Heart left ventricle (tissue), 16 donors: ENCODE measurements at regions of chr4 and their contacts with region 1.

Region 1: GRCh38 chr4:108570993-108571569 is 49.3 kb upstream of the RPL34 start:
- DNase-seq: no peak
- ATAC-seq: no peak
- H3K4me3 ChIP-seq: no peak overlapping the region
- H3K27ac ChIP-seq: no peak overlapping the region
- H3K4me1 ChIP-seq: peaks cover 0 to 4% (median 0%) of the 10 kb centered on the region in 12 donors
- H3K27me3 ChIP-seq: no peaks in the 10 kb centered on the region
- CTCF ChIP-seq: no peak
- POLR2A ChIP-seq: no peak

Region 2: DNA sequence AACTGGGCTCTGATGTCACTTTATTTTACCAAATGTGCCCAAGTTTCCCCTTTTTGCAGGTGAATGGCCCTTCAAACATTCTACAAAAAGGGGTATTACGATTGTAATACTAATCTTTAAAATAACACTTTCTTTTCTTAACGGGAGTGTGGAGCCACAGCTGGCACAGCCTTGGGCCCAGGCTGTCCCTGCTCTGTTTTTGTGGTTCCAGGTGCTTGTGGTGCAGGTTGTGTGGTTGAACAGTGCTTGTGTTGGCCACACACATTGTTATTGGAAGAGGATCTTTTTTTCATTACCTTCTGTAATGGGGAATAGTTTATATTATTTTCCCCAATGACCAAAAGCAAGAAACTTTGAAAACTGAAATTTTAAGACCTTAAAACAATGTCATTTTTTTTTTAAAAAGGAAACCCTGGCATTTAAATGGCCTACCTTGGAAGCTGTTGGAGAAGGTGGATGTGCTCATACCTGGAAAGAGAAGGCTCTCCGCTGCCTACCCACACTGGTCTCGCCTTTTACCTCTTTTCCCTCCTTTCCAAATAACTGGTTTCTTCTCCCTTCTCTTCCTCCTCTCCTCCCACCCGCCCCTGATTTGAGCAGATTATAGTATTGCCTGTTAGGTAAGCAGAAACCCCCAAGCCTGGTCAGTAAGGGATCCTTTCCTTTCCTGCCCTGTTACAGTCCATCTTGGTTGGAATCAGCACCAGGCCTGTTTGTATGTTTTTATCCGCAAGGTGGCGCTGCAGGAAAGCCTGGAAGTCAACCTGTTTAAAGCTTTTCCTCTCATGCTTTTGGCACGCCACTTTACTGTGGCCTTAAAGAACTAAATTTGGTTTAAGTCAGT is 552.8 kb before region 1 on chr4:
- intact Hi-C with region 1: loop called in 9 of 10 experiments (anchors 1 to 5 kb)
- DNase-seq: peak; percentile 73 to 86 (median 76)
- ATAC-seq: peak in 3 of 4 donors; percentile 72 to 81 (median 81)
- H3K4me3 ChIP-seq: no peak overlapping the region
- H3K27ac ChIP-seq: peak overlapping the region in 2 of 12 donors; percentile 1 to 26
- H3K4me1 ChIP-seq: peaks cover 0 to 23% (median 0%) of the 10 kb centered on the region in 12 donors
- H3K27me3 ChIP-seq: no peaks in the 10 kb centered on the region
- CTCF ChIP-seq: peak; percentile 81 to 92 (median 86)
- POLR2A ChIP-seq: no peak

Region 3: GRCh38 chr4:108024085-108024877 is 546.8 kb before region 1 on chr4:
- intact Hi-C with region 1: loop called in 8 of 10 experiments (anchors 2 to 5 kb)
- DNase-seq: no peak
- ATAC-seq: no peak
- H3K4me3 ChIP-seq: no peak overlapping the region
- H3K27ac ChIP-seq: no peak overlapping the region
- H3K4me1 ChIP-seq: peaks cover 0 to 4% (median 0%) of the 10 kb centered on the region in 12 donors
- H3K27me3 ChIP-seq: no peaks in the 10 kb centered on the region
- CTCF ChIP-seq: no peak
- POLR2A ChIP-seq: no peak

Region 4: DNA sequence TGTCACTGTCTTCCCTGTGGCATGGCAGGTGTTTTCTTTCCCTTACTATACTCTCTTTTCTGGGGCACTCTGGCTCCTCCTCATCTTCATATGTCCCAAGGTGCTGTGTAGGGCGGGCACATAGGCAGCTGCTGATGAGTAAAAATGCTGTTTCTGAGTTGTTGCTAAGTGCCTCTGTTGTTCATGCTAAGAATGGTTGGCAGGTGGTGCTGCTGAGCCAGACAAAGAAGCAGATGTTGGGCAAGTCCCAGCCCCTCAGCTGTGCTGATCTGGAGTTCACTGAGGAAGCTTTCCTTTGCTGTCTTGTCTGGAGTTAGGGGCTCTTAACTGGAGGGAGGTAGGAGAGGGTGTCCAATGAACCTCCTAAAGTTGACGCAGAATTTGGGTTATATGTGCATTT is 540.7 kb before region 1 on chr4:
- intact Hi-C with region 1: loop called in 1 of 10 experiments (anchors 5 kb)
- DNase-seq: peak in 1 of 5 donors; percentile 36
- ATAC-seq: peak; percentile 47 to 75 (median 60)
- H3K4me3 ChIP-seq: no peak overlapping the region
- H3K27ac ChIP-seq: no peak overlapping the region
- H3K4me1 ChIP-seq: peaks cover 0 to 4% (median 0%) of the 10 kb centered on the region in 12 donors
- H3K27me3 ChIP-seq: no peaks in the 10 kb centered on the region
- CTCF ChIP-seq: peak in 9 of 12 donors; percentile 19 to 46 (median 34)
- POLR2A ChIP-seq: no peak

Region 5: GRCh38 chr4:108053251-108053711 is 517.8 kb before region 1 on chr4:
- intact Hi-C with region 1: loop called in 1 of 10 experiments (anchors 10 kb)
- DNase-seq: no peak
- ATAC-seq: no peak
- H3K4me3 ChIP-seq: no peak overlapping the region
- H3K27ac ChIP-seq: no peak overlapping the region
- H3K4me1 ChIP-seq: peaks cover 0 to 8% (median 0%) of the 10 kb centered on the region in 12 donors
- H3K27me3 ChIP-seq: no peaks in the 10 kb centered on the region
- CTCF ChIP-seq: no peak
- POLR2A ChIP-seq: no peak

Region 6: GRCh38 chr4:108060164-108060563 is 510.9 kb before region 1 on chr4:
- intact Hi-C with region 1: loop called in 8 of 10 experiments (anchors 2 to 10 kb)
- DNase-seq: no peak
- ATAC-seq: peak in 3 of 4 donors; percentile 55 to 74 (median 68)
- H3K4me3 ChIP-seq: no peak overlapping the region
- H3K27ac ChIP-seq: no peak overlapping the region
- H3K4me1 ChIP-seq: no peaks in the 10 kb centered on the region
- H3K27me3 ChIP-seq: peaks cover 0 to 9% (median 0%) of the 10 kb centered on the region in 9 donors
- CTCF ChIP-seq: peak in 10 of 12 donors; percentile 11 to 56 (median 37)
- POLR2A ChIP-seq: no peak

Region 7: DNA sequence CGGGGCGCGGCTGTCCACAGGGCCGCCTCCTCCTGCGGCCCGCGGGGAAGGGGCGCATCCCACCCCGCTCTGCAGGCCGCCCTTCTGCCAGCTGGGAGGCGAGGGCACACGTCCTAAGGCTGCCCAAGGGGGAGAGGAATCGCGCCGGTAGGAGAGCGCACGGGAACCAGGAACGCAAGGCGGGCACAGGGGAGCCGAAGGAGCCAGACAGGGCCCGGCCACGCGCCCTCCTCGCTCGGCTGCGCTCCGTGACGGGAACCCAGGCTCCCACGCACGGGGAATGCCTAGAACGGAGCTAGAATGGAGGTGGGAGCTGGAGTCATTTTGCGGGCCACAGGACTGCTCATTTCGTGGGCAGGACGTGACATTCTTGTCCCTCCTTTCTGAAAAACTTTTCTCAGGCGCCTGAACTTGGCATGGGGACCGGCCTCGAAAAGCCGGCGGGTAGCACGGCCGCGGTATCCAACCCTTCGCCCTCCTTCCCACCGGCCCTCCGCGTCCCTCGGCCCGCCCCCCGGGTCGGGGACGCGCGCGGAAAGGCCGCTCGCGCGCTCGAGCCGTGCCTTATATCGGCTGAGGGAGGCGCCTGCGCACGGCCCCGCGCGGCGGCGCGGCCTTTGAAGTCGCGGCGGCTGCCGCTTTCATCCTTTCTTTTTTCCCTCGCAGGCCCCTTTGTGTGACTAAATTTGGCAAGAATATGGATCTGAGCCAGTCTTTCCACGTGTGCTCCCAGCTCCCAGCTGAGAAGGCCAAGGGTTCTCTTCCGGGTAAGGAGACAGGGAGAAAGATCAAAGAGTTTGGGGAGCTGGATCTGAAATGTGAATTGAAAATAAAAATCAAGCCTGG is 398.1 kb before region 1 on chr4:
- intact Hi-C with region 1: loop called in 2 of 10 experiments (anchors 10 kb)
- DNase-seq: peak; percentile 32 to 67 (median 42)
- ATAC-seq: peak in 3 of 4 donors; percentile 76 to 86 (median 84)
- H3K4me3 ChIP-seq: peak overlapping the region; percentile 32 to 70 (median 58)
- H3K27ac ChIP-seq: peak overlapping the region in 6 of 12 donors; percentile 17 to 70 (median 54)
- H3K4me1 ChIP-seq: peaks cover 0 to 33% (median 15%) of the 10 kb centered on the region in 12 donors
- H3K27me3 ChIP-seq: peaks cover 12 to 73% (median 59%) of the 10 kb centered on the region in 9 donors
- CTCF ChIP-seq: no peak
- POLR2A ChIP-seq: no peak

Region 8: DNA sequence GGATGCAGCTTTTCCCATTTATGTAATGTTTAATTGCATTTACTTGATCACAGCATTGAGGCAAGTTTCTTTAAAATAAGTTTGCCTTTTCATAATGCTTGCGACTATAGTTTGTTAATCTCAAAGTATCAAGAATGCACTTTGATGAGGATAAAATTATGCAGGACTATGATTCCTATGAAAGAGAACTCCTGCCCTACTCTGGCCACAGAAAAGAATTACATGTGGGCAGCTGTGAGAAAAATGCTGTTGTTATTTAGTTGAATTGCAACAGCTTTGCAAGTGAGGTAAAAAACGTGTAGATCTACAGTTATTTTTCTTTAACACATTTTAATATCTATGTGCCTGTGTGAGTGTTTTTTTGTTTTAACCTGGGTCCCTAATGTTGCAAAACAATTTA is 66.8 kb after region 1 on chr4:
- intact Hi-C with region 1: no loop called
- DNase-seq: no peak
- ATAC-seq: no peak
- H3K4me3 ChIP-seq: no peak overlapping the region
- H3K27ac ChIP-seq: no peak overlapping the region
- H3K4me1 ChIP-seq: no peaks in the 10 kb centered on the region
- H3K27me3 ChIP-seq: no peaks in the 10 kb centered on the region
- CTCF ChIP-seq: peak in 2 of 12 donors; percentile 8 to 12
- POLR2A ChIP-seq: no peak